Activated B cell treated with CpG ODN at 0.5 μM for 24 hours (primary cell): ENCODE measurements at regions of chr14 and their contacts with region 1.

Region 1: GRCh38 chr14:93655078-93655750 is 133.1 kb downstream of the PRIMA1 start:
- DNase-seq: no peak
- ATAC-seq: no peak
- H3K4me3 Mint-ChIP-seq: no peak overlapping the region
- H3K27ac Mint-ChIP-seq: no peak overlapping the region
- H3K4me1 Mint-ChIP-seq: no peaks in the 10 kb centered on the region
- H3K27me3 Mint-ChIP-seq: peaks cover 31% of the 10 kb centered on the region
- CTCF ChIP-seq: no peak

Region 2: DNA sequence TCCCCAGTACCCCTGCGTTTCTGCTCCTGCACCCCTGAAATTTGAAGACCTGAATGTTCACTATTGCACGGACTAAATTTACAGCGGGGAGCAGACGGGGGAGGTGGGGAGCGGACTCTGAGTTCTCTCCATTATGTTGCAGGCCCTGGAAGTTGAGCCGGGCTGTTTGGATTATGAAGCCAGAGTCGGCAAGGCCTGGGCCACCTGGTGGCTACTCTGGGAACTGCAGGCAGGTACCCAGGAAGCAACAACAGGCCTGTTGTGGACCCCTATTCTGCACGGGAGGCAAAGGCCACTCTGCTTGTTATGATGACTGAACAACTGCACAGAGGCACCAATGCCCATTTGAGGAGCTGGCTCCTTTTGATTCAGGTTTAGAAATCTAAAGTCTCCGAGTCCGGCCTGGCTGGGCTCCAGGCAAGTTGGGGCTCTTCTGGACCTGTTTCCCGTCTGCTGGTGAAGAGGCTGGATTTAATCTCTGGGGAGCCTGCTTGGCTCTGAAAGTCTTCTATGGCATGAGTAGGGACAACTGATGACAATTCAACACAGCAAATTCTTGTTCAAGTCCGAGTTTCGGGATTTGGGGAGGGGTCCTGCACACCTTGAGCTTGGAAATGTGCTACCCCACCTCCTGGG is 237.8 kb after region 1 on chr14:
- CTCF ChIA-PET with region 1: interaction called, 5 read pairs
- POLR2A ChIA-PET with region 1: no interaction called
- intact Hi-C with region 1: loop called (anchors 1 kb)
- DNase-seq: peak; percentile 71
- ATAC-seq: peak; percentile 65
- H3K4me3 Mint-ChIP-seq: no peak overlapping the region
- H3K27ac Mint-ChIP-seq: no peak overlapping the region
- H3K4me1 Mint-ChIP-seq: no peaks in the 10 kb centered on the region
- H3K27me3 Mint-ChIP-seq: peaks cover 32% of the 10 kb centered on the region
- CTCF ChIP-seq: peak; percentile 56

Region 3: GRCh38 chr14:94136575-94137331 is 481.5 kb after region 1 on chr14:
- CTCF ChIA-PET with region 1: interaction called, 7 read pairs
- POLR2A ChIA-PET with region 1: no interaction called
- intact Hi-C with region 1: loop called (anchors 1 kb)
- DNase-seq: peak; percentile 72
- ATAC-seq: peak; percentile 95
- H3K4me3 Mint-ChIP-seq: no peak overlapping the region
- H3K27ac Mint-ChIP-seq: no peak overlapping the region
- H3K4me1 Mint-ChIP-seq: peaks cover 3% of the 10 kb centered on the region
- H3K27me3 Mint-ChIP-seq: peaks cover 26% of the 10 kb centered on the region
- CTCF ChIP-seq: no peak